ENCODE measurements at regions of chr12 and their contacts with region 1.

Region 1: GRCh38 chr12:65593239-65593701 is 231.0 kb upstream of the HMGA2 start:
- DNase-seq: no peak

Region 2: DNA sequence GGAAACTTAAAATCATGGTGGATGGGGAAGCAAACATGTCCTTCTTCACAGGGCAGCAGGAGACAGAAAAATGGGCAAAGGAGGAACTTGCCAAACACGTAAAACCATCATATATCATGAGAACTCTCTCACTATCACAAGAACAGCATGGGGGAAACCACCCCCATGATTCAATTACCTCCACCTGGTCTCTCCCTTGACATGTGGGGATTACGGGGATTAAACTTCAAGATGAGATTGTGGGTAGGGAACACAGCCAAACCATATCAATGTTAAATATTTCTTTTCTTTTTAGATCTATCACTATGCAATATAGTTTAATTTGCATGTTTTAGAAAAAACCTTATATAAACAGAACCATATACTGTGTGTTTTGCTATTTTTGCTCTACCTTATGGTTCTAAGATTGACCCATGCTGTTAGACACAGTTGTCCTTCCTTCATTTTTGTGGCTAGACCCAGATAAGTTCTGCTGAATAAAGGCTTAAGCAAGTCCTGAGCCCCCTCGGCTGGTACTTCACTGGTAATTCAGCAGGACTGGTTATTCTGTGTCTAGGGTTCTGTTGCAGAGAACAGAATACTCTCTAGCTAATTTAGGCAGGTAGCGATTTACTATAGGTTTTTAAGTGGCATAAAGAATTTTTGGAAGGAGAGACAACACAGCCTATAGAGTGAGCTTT is 22.7 kb before region 1 on chr12:
- intact Hi-C with region 1: loop called (anchors 2 kb)
- DNase-seq: no peak

Region 3: GRCh38 chr12:65673732-65674131 is 80.5 kb after region 1 on chr12:
- intact Hi-C with region 1: no loop called
- DNase-seq: no peak

Region 4: GRCh38 chr12:65800937-65801336 is 207.7 kb after region 1 on chr12:
- intact Hi-C with region 1: no loop called
- DNase-seq: no peak

Measured in cardiac septum (tissue), 1 donor.